Mucosa of descending colon (tissue), 3 donors: ENCODE measurements at regions of chr12 and their contacts with region 1.

Region 1: DNA sequence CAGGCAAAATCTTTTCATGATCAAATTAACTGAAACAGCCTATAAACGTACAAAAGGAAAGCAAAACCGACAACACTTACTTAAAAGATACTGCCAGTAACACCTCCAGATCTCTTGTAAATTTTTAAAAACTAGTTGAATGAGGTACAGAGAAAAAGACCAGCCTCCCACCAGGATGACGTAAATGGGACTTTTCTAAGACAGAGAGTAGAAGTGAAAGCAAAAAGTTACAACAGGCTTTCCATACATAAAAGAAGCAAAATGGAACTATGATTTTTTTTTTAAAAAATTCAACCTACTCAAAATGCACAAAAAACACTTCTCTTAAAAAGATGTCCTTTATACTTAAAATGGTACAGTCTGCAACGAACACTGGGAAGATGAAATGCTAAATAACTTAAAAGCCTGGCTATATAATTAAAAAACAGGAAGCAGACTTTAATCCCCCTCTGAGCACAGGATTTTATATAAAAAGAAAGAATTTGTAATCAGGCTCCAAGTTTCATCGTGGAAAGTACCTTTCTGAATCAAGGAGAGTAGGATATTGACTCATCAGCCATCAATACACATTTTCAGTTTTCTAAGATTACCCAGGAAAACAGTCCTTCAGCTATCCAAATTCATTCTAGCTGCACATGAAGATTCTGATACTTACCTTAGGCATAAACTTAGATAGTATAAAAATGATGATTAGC is 14.2 kb upstream of the MYO1A start:
- DNase-seq: no peak
- ATAC-seq: peak; percentile 60
- H3K4me3 ChIP-seq: no peak overlapping the region
- H3K4me1 ChIP-seq: no peaks in the 10 kb centered on the region
- CTCF ChIP-seq: no peak

Region 2: DNA sequence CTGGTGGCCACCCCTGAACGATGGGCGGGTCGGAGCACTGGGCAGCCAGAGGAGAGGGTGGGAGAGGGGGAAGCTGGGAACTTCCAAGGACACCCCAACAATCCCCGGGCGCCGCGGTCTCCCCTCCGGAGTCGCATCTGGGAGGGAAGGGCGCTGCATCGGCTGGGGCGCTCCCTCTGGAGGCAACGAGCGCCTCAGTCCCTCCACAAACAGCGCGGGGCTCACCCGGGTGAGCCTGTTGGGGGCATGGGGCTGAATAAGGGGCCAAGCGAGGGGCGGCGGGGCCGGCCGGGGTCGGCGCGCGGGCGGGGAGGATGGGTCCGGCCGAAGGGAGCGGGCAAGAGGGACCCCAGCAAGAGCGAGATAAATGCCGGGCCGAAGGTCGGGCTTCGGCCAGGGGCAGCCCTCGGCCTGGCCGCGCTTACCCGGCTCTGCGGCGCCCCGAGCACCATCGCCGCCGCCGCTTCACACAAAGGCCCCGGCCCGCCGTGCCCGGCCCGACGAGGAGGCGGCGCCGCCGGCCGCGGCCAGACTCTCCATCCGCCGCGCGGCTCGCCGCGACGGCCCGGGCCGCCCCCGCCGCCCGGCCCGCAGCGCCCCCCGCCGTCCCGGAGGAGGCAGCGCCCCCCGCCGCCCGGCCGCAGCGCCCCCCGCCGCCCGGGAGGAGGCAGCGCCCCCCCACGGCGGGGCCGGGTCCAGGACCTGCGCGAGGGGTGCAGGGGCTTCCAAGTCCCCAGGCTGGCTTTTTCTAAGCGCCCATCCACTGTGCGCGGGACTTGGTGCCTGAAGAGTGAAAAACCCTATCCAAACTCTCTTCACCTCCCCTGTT is 57.9 kb before region 1 on chr12 and contains the start of gene ZBTB39:
- intact Hi-C with region 1: loop called (anchors 2 to 5 kb)
- DNase-seq: peak; percentile 56 to 80 (median 60)
- ATAC-seq: peak; percentile 90
- H3K4me3 ChIP-seq: peak within 1 kb of the TSS; percentile 58
- H3K4me1 ChIP-seq: peaks cover 13% of the 10 kb centered on the region
- CTCF ChIP-seq: peak; percentile 68
- total RNA-seq, gene ZBTB39: 3.5 to 8.6 (median 4.6) TPM

Region 3: GRCh38 chr12:57012600-57013465 is 51.3 kb before region 1 on chr12:
- intact Hi-C with region 1: loop called in 1 of 2 experiments (anchors 5 kb)
- DNase-seq: no peak
- ATAC-seq: no peak
- H3K4me3 ChIP-seq: no peak overlapping the region
- H3K4me1 ChIP-seq: no peaks in the 10 kb centered on the region
- CTCF ChIP-seq: no peak